Sigmoid colon (tissue), 7 donors: ENCODE measurements at regions of chr7 and their contacts with region 1.

Region 1: DNA sequence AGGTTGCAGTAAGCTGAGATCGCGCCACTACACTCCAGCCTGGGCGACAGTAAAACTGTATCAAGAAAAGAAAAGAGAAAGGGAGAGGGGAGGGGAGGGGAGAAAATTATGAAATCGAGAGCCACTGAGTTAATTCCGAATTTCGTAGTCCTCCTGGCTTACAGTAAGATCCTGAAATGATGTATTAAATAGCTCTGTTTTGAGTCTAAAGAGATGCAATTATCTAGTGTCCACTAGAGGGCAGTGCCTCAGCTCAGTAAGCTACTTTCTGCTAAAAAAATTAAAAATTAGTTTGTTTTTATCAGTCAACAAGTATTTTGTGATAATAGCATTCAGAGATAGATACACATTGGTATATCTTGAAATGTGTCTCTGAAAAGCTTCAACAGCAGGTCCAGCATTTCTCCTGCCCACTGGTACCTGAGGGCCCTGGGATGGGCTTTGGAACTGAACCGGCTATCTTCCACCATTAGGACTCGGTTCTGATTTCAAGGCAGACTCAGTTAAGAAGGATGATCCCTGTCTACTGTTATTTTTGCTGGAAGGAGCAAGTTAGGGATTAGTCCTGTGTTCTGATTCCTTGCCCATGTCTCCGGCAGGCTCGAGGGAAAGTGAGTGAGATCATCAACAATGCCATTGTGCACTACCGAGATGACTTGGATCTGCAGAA is 19.5 kb downstream of the TSPAN33 start:
- DNase-seq: no peak
- H3K4me3 ChIP-seq: no peak overlapping the region
- H3K27ac ChIP-seq: no peak overlapping the region
- H3K4me1 ChIP-seq: peaks cover 0 to 12% (median 8%) of the 10 kb centered on the region in 4 donors
- H3K27me3 ChIP-seq: no peaks in the 10 kb centered on the region
- CTCF ChIP-seq: peak; percentile 36 to 81 (median 55)
- EP300 ChIP-seq: no peak
- POLR2A ChIP-seq: no peak

Region 2: DNA sequence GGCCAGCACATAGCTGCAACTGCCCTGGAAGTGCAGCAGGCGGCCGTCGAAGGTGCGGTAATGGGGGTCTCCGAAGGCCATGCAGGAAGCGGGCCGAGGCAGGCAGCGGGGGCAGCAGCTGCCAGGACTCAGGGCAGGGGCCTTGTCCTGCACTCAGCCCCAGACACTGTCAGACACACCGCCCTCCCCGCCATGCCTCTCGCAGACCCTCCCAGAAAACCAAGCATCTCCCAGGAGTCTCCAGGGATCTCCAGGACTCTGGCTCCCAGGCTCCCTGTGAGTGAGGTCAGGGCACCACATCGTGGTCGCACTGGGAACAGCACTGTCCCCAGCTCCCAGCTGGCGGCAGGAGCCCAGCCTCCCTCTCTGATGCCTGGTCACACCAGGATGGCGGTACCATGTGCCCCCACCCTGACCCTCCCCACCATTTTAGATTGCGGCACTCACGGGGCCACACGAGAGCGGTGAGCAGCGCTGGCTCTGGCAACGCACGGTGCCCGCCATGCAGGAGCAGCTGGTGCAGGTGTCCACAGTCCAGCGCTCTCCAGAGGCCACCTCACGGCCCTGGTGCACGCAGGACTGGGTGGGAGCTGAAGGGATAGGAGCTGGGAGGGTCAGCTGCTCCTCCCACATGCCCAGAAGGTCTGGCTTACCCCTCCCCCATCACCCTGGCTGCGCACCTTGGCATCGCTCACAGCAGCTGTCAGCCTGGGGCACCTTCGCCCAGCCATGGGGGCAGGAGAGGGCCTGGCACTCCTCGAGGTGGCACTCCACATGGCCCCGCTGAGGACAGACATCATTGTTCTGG is 283.9 kb before region 1 on chr7:
- intact Hi-C with region 1: no loop called
- DNase-seq: peak; percentile 84
- H3K4me3 ChIP-seq: no peak overlapping the region
- H3K27ac ChIP-seq: no peak overlapping the region
- H3K4me1 ChIP-seq: peaks cover 0 to 9% (median 3%) of the 10 kb centered on the region in 4 donors
- H3K27me3 ChIP-seq: no peaks in the 10 kb centered on the region
- CTCF ChIP-seq: peak; percentile 62 to 83 (median 74)
- EP300 ChIP-seq: no peak
- POLR2A ChIP-seq: no peak

Region 3: DNA sequence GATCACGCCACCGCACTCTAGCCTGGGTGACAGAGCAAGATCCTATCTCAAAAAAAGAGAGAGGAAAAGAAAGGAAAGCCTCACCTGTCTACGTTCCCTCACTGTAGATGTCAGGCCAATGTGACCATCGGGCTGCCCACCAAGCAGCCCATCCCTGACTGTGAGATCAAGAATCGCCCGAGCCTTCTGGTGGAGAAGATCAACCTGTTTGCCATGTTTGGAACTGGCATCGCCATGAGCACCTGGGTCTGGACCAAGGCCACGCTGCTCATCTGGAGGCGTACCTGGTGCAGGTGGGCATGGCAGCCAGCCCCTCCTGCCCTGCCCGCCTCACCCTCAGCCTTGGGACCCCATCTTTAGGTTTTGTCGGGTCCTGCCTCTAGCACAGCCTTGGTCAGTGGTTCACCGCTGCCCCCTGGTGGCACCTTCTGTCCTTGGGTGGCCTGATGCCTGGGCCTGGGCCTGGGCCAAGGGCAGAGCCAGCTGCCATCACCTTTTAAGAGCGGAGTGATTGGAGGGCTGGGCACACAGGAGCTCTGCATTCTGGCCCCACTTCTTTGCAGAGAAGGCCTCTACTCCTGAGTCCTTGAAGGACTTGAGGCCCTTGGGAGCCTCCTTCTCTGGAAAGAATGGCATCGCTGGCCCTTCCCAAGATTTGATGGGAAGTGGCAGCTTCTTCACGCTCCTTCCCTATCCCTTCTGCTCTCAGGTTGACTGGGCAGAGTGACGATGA is 46.4 kb after region 1 on chr7:
- intact Hi-C with region 1: loop called (anchors 1 kb)
- DNase-seq: peak; percentile 88
- H3K4me3 ChIP-seq: no peak overlapping the region
- H3K27ac ChIP-seq: no peak overlapping the region
- H3K4me1 ChIP-seq: peaks cover 0 to 5% (median 1%) of the 10 kb centered on the region in 4 donors
- H3K27me3 ChIP-seq: no peaks in the 10 kb centered on the region
- CTCF ChIP-seq: peak; percentile 73 to 91 (median 82)
- EP300 ChIP-seq: no peak
- POLR2A ChIP-seq: no peak

Region 4: GRCh38 chr7:129252128-129252527 is 88.1 kb after region 1 on chr7:
- intact Hi-C with region 1: no loop called
- DNase-seq: no peak
- H3K4me3 ChIP-seq: no peak overlapping the region
- H3K27ac ChIP-seq: no peak overlapping the region
- H3K4me1 ChIP-seq: no peaks in the 10 kb centered on the region
- H3K27me3 ChIP-seq: no peaks in the 10 kb centered on the region
- CTCF ChIP-seq: no peak
- EP300 ChIP-seq: no peak
- POLR2A ChIP-seq: no peak